PC-3 (cell line): ENCODE measurements at regions of chr2 and their contacts with region 1.

Region 1: GRCh38 chr2:11829947-11830707 is 83.7 kb downstream of the LPIN1 start:
- DNase-seq: peak; percentile 98
- ATAC-seq: peak; percentile 85
- H3K4me3 ChIP-seq: peak overlapping the region; percentile 58
- H3K27ac ChIP-seq: peak overlapping the region; percentile 94
- H3K4me1 ChIP-seq: peaks cover 23% of the 10 kb centered on the region
- H3K27me3 ChIP-seq: no peaks in the 10 kb centered on the region
- CTCF ChIP-seq: peak; percentile 77

Region 2: DNA sequence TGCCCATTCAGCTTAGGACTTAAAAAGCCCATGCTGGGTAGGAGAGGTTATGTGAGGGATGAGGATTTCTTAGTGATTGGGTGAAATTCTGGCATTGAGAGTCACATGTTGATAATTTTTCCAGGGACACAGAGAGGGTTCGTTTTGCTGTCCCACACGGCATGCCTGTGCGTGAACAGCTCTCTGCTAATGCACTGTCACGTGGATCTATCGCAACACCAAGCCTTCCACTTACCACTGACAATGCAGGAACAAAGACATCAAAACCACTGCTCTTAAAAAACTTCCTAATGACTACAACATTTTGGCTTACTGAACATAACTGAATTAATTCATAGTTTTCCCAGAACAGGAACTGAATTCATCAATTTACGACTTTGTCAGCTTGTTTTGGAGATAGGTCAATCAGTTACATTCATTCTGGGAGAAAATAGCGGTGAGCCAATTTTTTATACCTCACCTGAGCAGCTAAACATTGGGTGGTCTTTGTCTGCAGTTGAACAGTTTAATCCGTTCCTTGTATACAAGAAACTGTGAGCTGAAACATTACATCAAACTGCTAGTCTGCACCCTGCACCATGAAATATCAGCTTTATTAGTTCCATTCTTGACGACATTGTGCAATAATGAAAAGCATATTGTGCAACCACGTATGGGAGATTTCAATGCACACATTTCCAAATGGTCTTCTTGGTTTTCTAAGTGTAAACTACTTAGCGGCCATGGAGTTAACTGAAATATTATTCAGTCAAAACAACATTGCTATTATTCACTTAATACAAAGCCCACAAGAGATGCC is 43.4 kb after region 1 on chr2:
- CTCF ChIA-PET with region 1: no interaction called
- POLR2A ChIA-PET with region 1: no interaction called
- intact Hi-C with region 1: no loop called
- DNase-seq: no peak
- ATAC-seq: no peak
- H3K4me3 ChIP-seq: no peak overlapping the region
- H3K27ac ChIP-seq: no peak overlapping the region
- H3K4me1 ChIP-seq: no peaks in the 10 kb centered on the region
- H3K27me3 ChIP-seq: no peaks in the 10 kb centered on the region
- CTCF ChIP-seq: no peak

Region 3: GRCh38 chr2:11955314-11955713 is 125.2 kb after region 1 on chr2:
- CTCF ChIA-PET with region 1: no interaction called
- POLR2A ChIA-PET with region 1: no interaction called
- intact Hi-C with region 1: no loop called
- DNase-seq: peak; percentile 10
- ATAC-seq: no peak
- H3K4me3 ChIP-seq: no peak overlapping the region
- H3K27ac ChIP-seq: no peak overlapping the region
- H3K4me1 ChIP-seq: no peaks in the 10 kb centered on the region
- H3K27me3 ChIP-seq: no peaks in the 10 kb centered on the region
- CTCF ChIP-seq: no peak

Region 4: GRCh38 chr2:12155303-12156051 is 325.4 kb after region 1 on chr2:
- CTCF ChIA-PET with region 1: no interaction called
- POLR2A ChIA-PET with region 1: interaction called, 3 read pairs
- intact Hi-C with region 1: loop called (anchors 1 kb)
- DNase-seq: peak; percentile 97
- ATAC-seq: peak; percentile 99
- H3K4me3 ChIP-seq: no peak overlapping the region
- H3K27ac ChIP-seq: peak overlapping the region; percentile 66
- H3K4me1 ChIP-seq: peaks cover 20% of the 10 kb centered on the region
- H3K27me3 ChIP-seq: no peaks in the 10 kb centered on the region
- CTCF ChIP-seq: no peak

Region 5: GRCh38 chr2:12303181-12304030 is 473.3 kb after region 1 on chr2:
- CTCF ChIA-PET with region 1: no interaction called
- POLR2A ChIA-PET with region 1: no interaction called
- intact Hi-C with region 1: loop called (anchors 5 kb)
- DNase-seq: peak; percentile 87
- ATAC-seq: peak; percentile 80
- H3K4me3 ChIP-seq: no peak overlapping the region
- H3K27ac ChIP-seq: peak overlapping the region; percentile 78
- H3K4me1 ChIP-seq: peaks cover 41% of the 10 kb centered on the region
- H3K27me3 ChIP-seq: no peaks in the 10 kb centered on the region
- CTCF ChIP-seq: no peak

Region 6: GRCh38 chr2:12456293-12457151 is 626.4 kb after region 1 on chr2:
- CTCF ChIA-PET with region 1: no interaction called
- POLR2A ChIA-PET with region 1: no interaction called
- intact Hi-C with region 1: loop called (anchors 10 kb)
- DNase-seq: peak; percentile 92
- ATAC-seq: peak; percentile 97
- H3K4me3 ChIP-seq: peak overlapping the region; percentile 61
- H3K27ac ChIP-seq: peak overlapping the region; percentile 84
- H3K4me1 ChIP-seq: peaks cover 15% of the 10 kb centered on the region
- H3K27me3 ChIP-seq: no peaks in the 10 kb centered on the region
- CTCF ChIP-seq: no peak

Region 7: DNA sequence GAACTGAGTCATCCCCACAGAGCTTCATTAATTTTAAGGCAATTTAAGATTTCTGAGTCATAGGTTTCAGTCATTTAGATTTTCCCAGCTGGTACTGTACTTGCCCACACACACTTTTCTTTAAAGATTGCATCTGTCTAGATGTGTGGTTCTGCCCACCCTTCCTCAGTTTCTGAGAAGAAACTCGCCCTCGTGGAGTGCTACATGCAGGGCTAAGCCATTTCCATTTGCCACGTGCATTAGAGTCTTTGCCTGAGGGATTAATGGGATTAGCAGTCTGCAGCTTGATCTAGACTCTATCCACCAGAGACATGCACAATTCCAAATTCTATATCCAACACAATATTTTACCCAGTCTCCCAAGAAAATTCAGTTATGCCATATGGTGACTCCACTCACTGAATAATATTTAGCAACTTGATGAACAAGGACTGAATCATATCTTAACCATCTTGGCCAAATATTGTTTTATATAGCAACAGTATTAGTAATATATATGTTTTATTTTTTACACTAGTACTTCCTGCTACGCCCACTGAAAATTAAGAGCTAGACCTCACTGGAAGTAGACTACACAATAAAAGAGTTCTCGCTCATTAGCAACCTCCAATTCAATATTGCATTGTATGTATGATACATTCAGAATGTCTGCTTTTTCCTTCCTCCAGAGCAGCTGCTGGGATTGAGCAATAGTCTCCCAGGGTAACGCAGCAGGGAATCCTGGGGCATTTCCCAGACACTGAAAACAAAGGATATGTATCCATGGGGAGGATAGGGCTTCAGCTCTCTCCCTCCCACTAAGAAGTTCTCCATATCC is 872.4 kb after region 1 on chr2:
- CTCF ChIA-PET with region 1: interaction called, 5 read pairs
- POLR2A ChIA-PET with region 1: interaction called, 4 read pairs
- intact Hi-C with region 1: loop called (anchors 1 kb)
- DNase-seq: peak; percentile 94
- ATAC-seq: peak; percentile 79
- H3K4me3 ChIP-seq: peak overlapping the region; percentile 28; the same call in 1 of the 2 replicates
- H3K27ac ChIP-seq: peak overlapping the region; percentile 99
- H3K4me1 ChIP-seq: peaks cover 57% of the 10 kb centered on the region
- H3K27me3 ChIP-seq: no peaks in the 10 kb centered on the region
- CTCF ChIP-seq: no peak